Dendritic cell treated with granulocyte-macrophage colony-stimulating factor and Interleukin-4, amounts not matched to agents 40 ng/mL and 50 ng/mL, for 4 days (primary cell): ENCODE measurements at regions of chr3 and their contacts with region 1.

Region 1: GRCh38 chr3:136752422-136753325 is 496 bp upstream of the STAG1 start:
- H3K4me3 Mint-ChIP-seq: peak overlapping the region; percentile 94
- H3K27ac Mint-ChIP-seq: peak overlapping the region; percentile 98
- H3K4me1 Mint-ChIP-seq: peaks cover 49% of the 10 kb centered on the region
- H3K27me3 Mint-ChIP-seq: no peaks in the 10 kb centered on the region

Region 2: DNA sequence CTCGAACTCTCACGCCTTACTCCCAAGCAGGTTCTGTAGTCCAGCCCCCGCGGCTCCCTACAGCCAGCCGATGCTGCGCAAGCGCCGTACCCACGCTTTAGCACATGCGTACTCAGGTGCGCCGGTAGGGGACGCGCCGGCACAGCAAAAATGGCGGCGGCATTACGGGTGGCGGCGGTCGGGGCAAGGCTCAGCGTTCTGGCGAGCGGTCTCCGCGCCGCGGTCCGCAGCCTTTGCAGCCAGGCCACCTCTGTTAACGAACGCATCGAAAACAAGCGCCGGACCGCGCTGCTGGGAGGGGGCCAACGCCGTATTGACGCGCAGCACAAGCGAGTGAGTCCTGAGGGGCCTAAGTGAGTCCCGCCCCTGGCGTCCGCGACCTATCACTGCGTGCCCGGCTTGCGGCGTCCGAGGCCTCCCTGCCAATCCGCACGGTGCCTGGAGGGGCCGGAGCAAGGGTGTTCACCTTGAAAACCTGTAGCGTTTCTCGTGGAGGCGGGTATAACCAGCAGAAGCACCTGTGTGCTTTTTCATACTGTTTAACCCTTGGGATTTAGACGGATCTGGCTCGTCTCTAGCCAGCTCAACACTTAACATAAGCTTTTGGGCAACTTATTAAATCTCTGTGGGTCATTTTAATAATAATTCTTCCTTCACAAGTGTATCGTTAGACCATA is 502.3 kb before region 1 on chr3 and contains the start of gene PCCB:
- intact Hi-C with region 1: loop called (anchors 5 kb)
- H3K4me3 Mint-ChIP-seq: peak within 1 kb of the TSS; percentile 86
- H3K27ac Mint-ChIP-seq: peak within 1 kb of the TSS; percentile 96
- H3K4me1 Mint-ChIP-seq: peaks cover 21% of the 10 kb centered on the region
- H3K27me3 Mint-ChIP-seq: no peaks in the 10 kb centered on the region

Region 3: DNA sequence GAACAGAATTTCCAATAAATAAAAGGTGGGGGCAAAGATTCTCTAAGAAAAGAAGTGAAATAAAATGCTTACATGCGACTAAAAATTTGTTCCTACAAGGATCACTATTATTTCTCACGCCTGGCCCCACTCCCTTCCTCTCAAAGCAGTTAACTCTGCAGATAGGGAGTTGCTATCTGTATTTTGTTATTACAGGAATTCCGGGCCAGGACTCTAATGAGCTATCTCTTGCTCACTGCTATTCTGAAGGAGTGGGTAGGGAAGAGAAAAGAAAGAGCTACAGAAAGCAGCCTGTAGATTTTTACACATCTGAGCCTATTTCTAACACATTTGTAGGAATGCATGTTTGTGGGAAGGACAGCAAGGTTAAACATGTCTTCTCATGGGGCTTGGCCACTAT is 362.1 kb before region 1 on chr3:
- intact Hi-C with region 1: loop called (anchors 1 kb)
- H3K4me3 Mint-ChIP-seq: no peak overlapping the region
- H3K27ac Mint-ChIP-seq: no peak overlapping the region
- H3K4me1 Mint-ChIP-seq: no peaks in the 10 kb centered on the region
- H3K27me3 Mint-ChIP-seq: no peaks in the 10 kb centered on the region

Region 4: GRCh38 chr3:136545664-136546268 is 206.9 kb before region 1 on chr3:
- intact Hi-C with region 1: loop called (anchors 5 kb)
- H3K4me3 Mint-ChIP-seq: no peak overlapping the region
- H3K27ac Mint-ChIP-seq: no peak overlapping the region
- H3K4me1 Mint-ChIP-seq: peaks cover 52% of the 10 kb centered on the region
- H3K27me3 Mint-ChIP-seq: no peaks in the 10 kb centered on the region

Region 5: DNA sequence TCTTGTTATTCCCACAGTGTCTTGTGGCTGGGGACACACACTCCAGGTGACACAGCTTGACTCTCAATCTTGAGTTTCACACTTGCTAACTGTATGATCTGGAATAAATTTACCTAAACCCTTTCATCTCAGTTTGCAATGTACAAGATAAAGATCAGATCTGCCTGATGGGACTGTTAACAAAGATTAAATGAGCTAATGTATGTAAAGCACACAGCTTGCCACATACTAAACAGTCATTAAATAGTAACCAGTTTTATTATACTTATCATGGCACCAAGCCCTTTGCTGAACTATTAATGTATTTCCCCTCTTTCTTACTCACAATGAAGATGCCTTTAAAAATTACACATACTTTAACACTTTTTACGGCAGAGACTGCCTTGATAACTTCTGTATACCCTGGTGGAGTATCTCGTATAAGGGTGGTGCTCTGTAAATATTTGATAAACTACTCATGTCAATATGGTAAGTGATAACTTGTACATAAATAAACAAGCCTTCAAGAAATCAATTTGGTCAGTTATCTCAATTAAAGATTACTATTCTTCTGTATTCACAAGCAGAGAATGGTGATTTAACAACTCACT is 185.0 kb before region 1 on chr3:
- intact Hi-C with region 1: no loop called
- H3K4me3 Mint-ChIP-seq: no peak overlapping the region
- H3K27ac Mint-ChIP-seq: no peak overlapping the region
- H3K4me1 Mint-ChIP-seq: no peaks in the 10 kb centered on the region
- H3K27me3 Mint-ChIP-seq: no peaks in the 10 kb centered on the region

Region 6: GRCh38 chr3:136624894-136625815 is 127.5 kb before region 1 on chr3:
- intact Hi-C with region 1: loop called (anchors 5 kb)
- H3K4me3 Mint-ChIP-seq: no peak overlapping the region
- H3K27ac Mint-ChIP-seq: peak overlapping the region; percentile 34
- H3K4me1 Mint-ChIP-seq: peaks cover 41% of the 10 kb centered on the region
- H3K27me3 Mint-ChIP-seq: no peaks in the 10 kb centered on the region

Region 7: GRCh38 chr3:136861890-136862616 is 109.4 kb after region 1 on chr3 and contains the start of gene NCK1:
- intact Hi-C with region 1: loop called (anchors 1 kb)
- H3K4me3 Mint-ChIP-seq: peak within 1 kb of the TSS; percentile 97
- H3K27ac Mint-ChIP-seq: peak within 1 kb of the TSS; percentile 98
- H3K4me1 Mint-ChIP-seq: peaks cover 46% of the 10 kb centered on the region
- H3K27me3 Mint-ChIP-seq: no peaks in the 10 kb centered on the region